H1 (cell line): ENCODE measurements at regions of chr1 and their contacts with region 1.

Region 1: GRCh38 chr1:46477153-46477929 is 12.3 kb upstream of the DMBX1 start:
- DNase-seq: peak; percentile 51 to 92
- H3K4me3 ChIP-seq: no peak overlapping the region
- H3K27ac ChIP-seq: no peak overlapping the region
- H3K4me1 ChIP-seq: peaks cover 3 to 14% (median 10%) of the 10 kb centered on the region in 4 experiments
- H3K27me3 ChIP-seq: peaks cover 0 to 53% (median 43%) of the 10 kb centered on the region in 4 experiments; a peak in 6 of 7 replicates
- CTCF ChIP-seq: peak; percentile 84 to 88 (median 88)
- EP300 ChIP-seq: no peak
- POLR2A ChIP-seq: no peak
- RAD21 ChIP-seq: peak; percentile 83 to 87

Region 2: DNA sequence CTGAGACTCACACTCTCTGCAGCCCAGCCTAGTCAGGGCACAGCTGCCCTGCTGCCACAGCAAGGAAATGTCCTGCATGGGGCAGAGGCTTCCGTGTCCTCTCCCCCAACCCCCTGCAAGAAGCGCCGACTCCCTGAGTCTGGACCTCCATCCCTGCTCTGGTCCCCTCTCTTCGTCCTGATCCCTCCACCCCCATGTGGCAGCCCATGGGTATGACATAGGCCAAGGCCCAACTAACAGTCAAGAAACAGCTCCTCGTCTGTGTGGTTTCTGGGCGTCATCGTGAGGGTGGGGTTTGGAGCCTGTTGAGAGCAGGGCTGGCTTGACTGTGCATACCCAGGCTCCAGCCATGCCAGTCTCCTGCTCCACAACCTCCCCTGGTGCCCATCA is 63.8 kb before region 1 on chr1:
- CTCF ChIA-PET with region 1: interaction called, 12 read pairs
- POLR2A ChIA-PET with region 1: no interaction called
- DNase-seq: peak in 1 of 2 experiments; percentile 70
- H3K4me3 ChIP-seq: no peak overlapping the region
- H3K27ac ChIP-seq: no peak overlapping the region
- H3K4me1 ChIP-seq: peaks cover 0 to 5% (median 2%) of the 10 kb centered on the region in 4 experiments; a peak in 1 of 7 replicates
- H3K27me3 ChIP-seq: no peaks in the 10 kb centered on the region
- CTCF ChIP-seq: peak in 2 of 3 experiments; percentile 59 to 70; a peak in 3 of 4 replicates
- EP300 ChIP-seq: no peak
- POLR2A ChIP-seq: no peak
- RAD21 ChIP-seq: peak; percentile 7 to 29; a peak in 3 of 4 replicates

Region 3: DNA sequence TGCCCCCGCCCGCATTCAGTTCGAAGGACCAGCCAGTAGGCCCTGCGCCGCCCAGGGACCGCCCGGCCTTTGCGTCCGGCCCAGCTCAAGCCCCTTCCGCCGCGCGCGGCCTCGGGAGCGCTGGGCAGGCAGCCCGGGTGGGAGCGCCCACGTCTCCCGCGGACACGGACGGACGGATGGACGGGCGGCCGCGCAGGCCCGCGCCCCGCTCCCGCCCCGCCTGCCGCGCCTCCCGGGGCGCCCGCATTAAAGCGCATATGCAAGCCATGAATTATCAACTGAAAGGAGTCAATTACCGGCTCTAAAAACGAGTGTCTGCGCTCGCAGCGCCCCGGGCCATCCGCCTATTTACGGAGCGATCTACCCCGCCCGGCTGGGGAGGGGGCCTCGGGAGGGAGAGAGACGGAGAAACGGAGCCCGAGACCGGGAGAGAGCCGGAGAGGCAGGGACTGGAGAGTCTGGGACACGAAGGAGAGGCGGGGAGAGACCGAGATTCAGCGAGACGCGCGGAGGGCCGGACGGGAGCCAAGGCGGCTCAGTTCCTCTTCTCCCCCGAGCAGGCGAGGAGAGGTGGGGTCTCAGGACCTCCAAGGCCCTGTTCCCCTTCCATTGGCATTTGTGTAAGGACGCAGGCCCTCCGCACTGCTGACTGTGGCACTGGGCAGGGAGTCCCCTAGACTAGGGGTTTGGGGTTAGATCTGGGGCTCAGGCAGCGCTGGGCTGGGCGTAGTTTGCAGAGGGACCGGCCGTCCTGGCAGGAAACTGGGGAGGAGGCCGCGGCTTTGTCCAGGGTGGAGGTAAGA is 29.0 kb before region 1 on chr1:
- CTCF ChIA-PET with region 1: interaction called, 147 read pairs
- POLR2A ChIA-PET with region 1: interaction called, 4 read pairs
- DNase-seq: peak; percentile 69 to 80
- H3K4me3 ChIP-seq: peak overlapping the region; percentile 41 to 61 (median 54)
- H3K27ac ChIP-seq: no peak overlapping the region
- H3K4me1 ChIP-seq: peaks cover 8 to 31% (median 23%) of the 10 kb centered on the region in 4 experiments
- H3K27me3 ChIP-seq: peaks cover 56 to 72% (median 69%) of the 10 kb centered on the region in 4 experiments
- CTCF ChIP-seq: no peak
- EP300 ChIP-seq: no peak
- POLR2A ChIP-seq: no peak
- RAD21 ChIP-seq: peak in 1 of 2 experiments; percentile 10; a peak in 2 of 4 replicates

Region 4: GRCh38 chr1:46456411-46456963 is 20.9 kb before region 1 on chr1:
- CTCF ChIA-PET with region 1: interaction called, 46 read pairs
- POLR2A ChIA-PET with region 1: interaction called, 4 read pairs
- DNase-seq: no peak
- H3K4me3 ChIP-seq: no peak overlapping the region
- H3K27ac ChIP-seq: no peak overlapping the region
- H3K4me1 ChIP-seq: peaks cover 0 to 15% (median 8%) of the 10 kb centered on the region in 4 experiments; a peak in 6 of 7 replicates
- H3K27me3 ChIP-seq: peaks cover 21 to 59% (median 42%) of the 10 kb centered on the region in 4 experiments
- CTCF ChIP-seq: no peak
- EP300 ChIP-seq: no peak
- POLR2A ChIP-seq: no peak
- RAD21 ChIP-seq: no peak

Region 5: GRCh38 chr1:46489638-46490405 is 12.5 kb after region 1 on chr1 and contains the start of gene DMBX1:
- CTCF ChIA-PET with region 1: interaction called, 60 read pairs
- POLR2A ChIA-PET with region 1: interaction called, 6 read pairs
- DNase-seq: peak in 1 of 2 experiments; percentile 87
- H3K4me3 ChIP-seq: peak within 1 kb of the TSS; percentile 33 to 64 (median 44)
- H3K27ac ChIP-seq: no peak within 1 kb of the TSS
- H3K4me1 ChIP-seq: peaks cover 14 to 48% (median 42%) of the 10 kb centered on the region in 4 experiments
- H3K27me3 ChIP-seq: peaks cover 91 to 100% (median 99%) of the 10 kb centered on the region in 4 experiments
- CTCF ChIP-seq: no peak
- EP300 ChIP-seq: no peak
- POLR2A ChIP-seq: no peak
- RAD21 ChIP-seq: no peak
- total RNA-seq, gene DMBX1: 0.30 TPM in 1 of 2 replicates, not detected in the other

Region 6: GRCh38 chr1:46503421-46503820 is 26.1 kb after region 1 on chr1:
- CTCF ChIA-PET with region 1: interaction called, 20 read pairs
- POLR2A ChIA-PET with region 1: no interaction called
- DNase-seq: no peak
- H3K4me3 ChIP-seq: no peak overlapping the region
- H3K27ac ChIP-seq: no peak overlapping the region
- H3K4me1 ChIP-seq: peaks cover 0 to 8% (median 6%) of the 10 kb centered on the region in 4 experiments; a peak in 4 of 7 replicates
- H3K27me3 ChIP-seq: peaks cover 0 to 3% (median under 1%) of the 10 kb centered on the region in 4 experiments; a peak in 4 of 7 replicates
- CTCF ChIP-seq: no peak
- EP300 ChIP-seq: no peak
- POLR2A ChIP-seq: no peak
- RAD21 ChIP-seq: no peak

Region 7: DNA sequence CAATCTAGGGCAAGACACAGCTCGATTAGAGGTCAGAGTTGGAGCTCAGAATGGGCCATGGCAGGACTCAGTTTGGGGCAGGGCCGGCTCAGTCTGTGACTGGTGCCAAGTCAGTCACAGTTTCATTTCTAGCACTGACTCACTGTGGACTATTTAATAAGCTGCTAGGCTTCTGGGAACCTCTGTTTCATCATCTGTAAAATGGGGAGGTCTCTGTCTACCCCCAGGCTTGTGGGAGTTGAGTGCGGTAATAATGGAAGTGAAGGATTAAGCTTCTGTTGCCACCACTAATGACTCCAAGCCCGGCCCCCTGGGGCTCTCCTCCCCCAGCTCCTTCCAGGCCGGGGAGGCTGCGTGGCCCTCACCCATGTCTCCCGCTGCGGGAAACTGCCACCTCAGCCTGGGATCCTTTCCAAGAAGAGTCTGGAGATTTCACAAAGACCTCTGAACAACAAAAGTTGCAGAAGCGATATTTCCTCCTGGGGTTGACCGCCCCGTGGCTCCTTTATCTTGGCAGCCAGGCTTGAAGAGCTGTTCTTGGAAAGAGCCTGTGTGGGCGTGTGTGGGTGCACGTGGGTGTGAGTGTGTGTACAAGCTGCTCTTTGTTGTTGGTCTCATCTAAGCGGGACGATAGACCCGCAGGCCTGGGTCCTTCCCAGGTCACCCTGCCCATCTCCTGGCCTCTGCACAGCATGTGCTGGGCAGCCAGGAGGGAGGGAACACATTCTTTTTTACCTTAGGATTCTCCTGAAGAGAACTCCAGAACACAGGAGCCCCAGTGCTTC is 45.0 kb after region 1 on chr1:
- CTCF ChIA-PET with region 1: interaction called, 1,068 read pairs
- POLR2A ChIA-PET with region 1: interaction called, 3 read pairs
- DNase-seq: peak in 1 of 2 experiments; percentile 45
- H3K4me3 ChIP-seq: no peak overlapping the region
- H3K27ac ChIP-seq: no peak overlapping the region
- H3K4me1 ChIP-seq: peaks cover 24 to 53% (median 34%) of the 10 kb centered on the region in 4 experiments
- H3K27me3 ChIP-seq: peaks cover 9 to 47% (median 42%) of the 10 kb centered on the region in 4 experiments
- CTCF ChIP-seq: no peak
- EP300 ChIP-seq: no peak
- POLR2A ChIP-seq: no peak
- RAD21 ChIP-seq: no peak

Region 8: GRCh38 chr1:46581681-46582455 is 104.5 kb after region 1 on chr1:
- CTCF ChIA-PET with region 1: no interaction called
- POLR2A ChIA-PET with region 1: no interaction called
- DNase-seq: no peak
- H3K4me3 ChIP-seq: no peak overlapping the region
- H3K27ac ChIP-seq: no peak overlapping the region
- H3K4me1 ChIP-seq: peaks cover 0 to 3% (median under 1%) of the 10 kb centered on the region in 4 experiments; a peak in 2 of 7 replicates
- H3K27me3 ChIP-seq: no peaks in the 10 kb centered on the region
- CTCF ChIP-seq: no peak
- EP300 ChIP-seq: no peak
- POLR2A ChIP-seq: no peak
- RAD21 ChIP-seq: no peak

Region 9: GRCh38 chr1:46667782-46668760 is 190.7 kb after region 1 on chr1 and contains the start of gene ATPAF1:
- CTCF ChIA-PET with region 1: no interaction called
- POLR2A ChIA-PET with region 1: no interaction called
- DNase-seq: peak; percentile 81 to 86
- H3K4me3 ChIP-seq: peak within 1 kb of the TSS; percentile 55 to 74 (median 57)
- H3K27ac ChIP-seq: peak within 1 kb of the TSS; percentile 81
- H3K4me1 ChIP-seq: peaks cover 5 to 16% (median 7%) of the 10 kb centered on the region in 4 experiments; a peak in 6 of 7 replicates
- H3K27me3 ChIP-seq: no peaks in the 10 kb centered on the region
- CTCF ChIP-seq: no peak; a peak in 1 of 4 replicates
- EP300 ChIP-seq: peak in 1 of 2 experiments; percentile 48; a peak in 1 of 3 replicates
- POLR2A ChIP-seq: peak; percentile 63 to 92
- RAD21 ChIP-seq: peak in 1 of 2 experiments; percentile 23; a peak in 1 of 4 replicates
- total RNA-seq, gene ATPAF1: 44.6 and 46.7 TPM in 2 replicates